Endothelial cell of umbilical vein (primary cell): ENCODE measurements at regions of chr4 and their contacts with region 1.

Region 1: GRCh38 chr4:83150653-83151330 is 36.3 kb upstream of the PLAC8 start:
- DNase-seq: peak; percentile 87
- H3K4me3 ChIP-seq: peak overlapping the region in 1 of 3 experiments; percentile 7
- H3K27ac ChIP-seq: peak overlapping the region; percentile 78
- H3K4me1 ChIP-seq: peaks cover 38% of the 10 kb centered on the region
- H3K27me3 ChIP-seq: no peaks in the 10 kb centered on the region
- CTCF ChIP-seq: no peak
- POLR2A ChIP-seq: peak; percentile 16

Region 2: DNA sequence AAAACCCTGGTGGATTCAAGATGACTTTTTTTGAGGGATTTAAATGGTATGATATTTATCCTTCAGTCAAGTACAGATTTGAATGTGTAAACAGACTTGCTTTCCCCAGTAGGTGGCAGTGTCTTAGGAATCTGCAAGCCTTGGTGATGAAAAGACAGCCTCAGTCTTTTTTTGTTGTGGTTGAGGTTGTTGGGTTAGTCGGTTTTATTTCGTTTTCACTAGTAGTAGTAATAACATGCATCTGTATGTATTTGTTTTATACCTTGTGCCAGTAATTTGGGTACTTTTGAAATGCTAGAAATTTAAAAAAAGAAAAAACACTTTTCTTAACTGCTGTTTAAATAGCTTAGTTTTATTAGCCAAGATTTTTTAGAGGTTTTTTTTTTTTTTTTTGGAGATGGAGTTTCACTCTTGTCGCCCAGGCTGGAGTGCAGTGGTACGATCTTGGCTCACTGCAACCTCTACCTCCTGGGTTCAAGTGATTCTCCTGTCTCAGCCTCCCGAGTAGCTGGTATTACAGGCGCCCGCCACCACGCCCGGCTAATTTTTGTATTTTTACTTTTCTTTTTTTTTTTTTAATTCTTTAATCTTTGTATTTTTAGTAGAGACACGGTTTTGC is 76.6 kb before region 1 on chr4:
- CTCF ChIA-PET with region 1: interaction called, 10 read pairs
- POLR2A ChIA-PET with region 1: no interaction called
- dilution Hi-C with region 1: no loop called
- intact Hi-C with region 1: no loop called
- DNase-seq: peak; percentile 72
- H3K4me3 ChIP-seq: no peak overlapping the region
- H3K27ac ChIP-seq: no peak overlapping the region
- H3K4me1 ChIP-seq: peaks cover 28% of the 10 kb centered on the region
- H3K27me3 ChIP-seq: no peaks in the 10 kb centered on the region
- CTCF ChIP-seq: peak; percentile 59 to 63
- POLR2A ChIP-seq: no peak

Region 3: DNA sequence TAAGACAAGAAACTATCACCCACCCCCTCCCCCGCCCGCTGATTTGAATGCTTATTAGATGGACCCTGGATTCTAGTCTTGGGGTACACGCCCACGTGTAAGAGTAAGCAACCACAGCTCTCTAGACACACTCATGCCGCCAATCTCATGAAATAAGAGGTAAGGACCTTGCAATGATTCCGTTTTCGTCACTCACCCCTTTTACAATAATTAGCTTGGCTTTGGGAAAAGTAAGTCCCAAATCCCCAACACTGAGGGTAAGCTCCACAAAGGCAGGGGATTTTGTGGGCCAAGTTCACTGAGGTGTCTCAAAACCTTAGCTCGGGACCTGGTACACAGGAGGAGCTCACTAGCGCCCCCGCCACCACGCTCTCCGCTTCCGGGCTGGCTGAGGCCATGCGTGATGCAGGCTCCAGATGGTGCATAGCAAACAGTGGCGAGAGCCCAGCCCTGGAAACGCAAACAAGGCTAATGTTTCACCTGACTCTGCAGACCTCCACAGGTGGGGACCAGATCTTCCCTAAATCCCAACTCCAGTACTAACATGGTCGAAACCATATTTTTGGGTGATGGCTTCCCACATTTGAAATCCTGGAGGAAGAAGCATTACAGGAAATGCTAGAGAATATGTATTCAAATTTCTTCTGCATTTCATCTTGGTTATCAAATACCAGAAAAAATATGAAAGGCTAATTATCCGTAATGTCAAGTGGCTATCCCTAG is 40.4 kb before region 1 on chr4:
- CTCF ChIA-PET with region 1: interaction called, 10 read pairs
- POLR2A ChIA-PET with region 1: no interaction called
- dilution Hi-C with region 1: no loop called
- intact Hi-C with region 1: loop called (anchors 1 kb)
- DNase-seq: peak; percentile 86
- H3K4me3 ChIP-seq: peak overlapping the region; percentile 48 to 78 (median 70)
- H3K27ac ChIP-seq: peak overlapping the region; percentile 71
- H3K4me1 ChIP-seq: peaks cover 13% of the 10 kb centered on the region
- H3K27me3 ChIP-seq: no peaks in the 10 kb centered on the region
- CTCF ChIP-seq: peak; percentile 72 to 87
- POLR2A ChIP-seq: peak; percentile 31

Region 4: DNA sequence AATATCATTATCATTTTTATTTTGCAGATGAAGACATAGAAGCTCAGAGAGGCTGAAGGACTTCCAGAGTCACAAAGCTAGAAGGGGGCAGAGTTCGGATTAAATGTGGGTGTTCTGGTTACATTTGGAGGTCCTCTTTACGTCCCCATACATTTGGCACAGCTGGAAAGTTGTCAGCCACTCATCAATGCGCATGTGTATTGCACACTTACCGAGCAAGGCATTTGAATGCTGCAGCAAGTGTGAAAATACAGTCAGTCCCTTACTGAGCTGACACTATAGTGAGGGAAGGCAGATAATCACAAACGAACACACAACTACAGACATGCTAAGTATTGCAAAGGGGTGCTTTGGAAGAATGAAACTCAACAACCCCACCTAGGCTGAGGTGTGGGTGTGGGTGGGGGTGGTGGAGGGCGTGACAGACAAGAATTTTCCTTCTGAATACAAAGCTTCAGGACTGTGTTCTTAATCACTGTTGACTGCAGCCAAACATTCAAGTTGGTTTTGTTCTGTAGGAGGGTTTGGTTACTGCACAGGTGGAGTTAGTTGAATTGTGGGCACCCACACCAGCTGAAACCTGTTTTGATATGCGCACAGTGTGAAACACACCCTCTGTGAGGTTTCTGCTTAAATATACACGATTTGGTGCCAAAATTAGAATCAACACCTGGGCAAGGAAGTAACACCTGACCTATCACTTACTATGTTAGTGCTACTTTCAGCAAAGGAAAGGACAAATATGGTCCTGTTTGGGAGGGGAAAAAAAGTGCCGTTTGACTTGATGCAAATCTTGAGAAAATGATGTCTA is 61.5 kb after region 1 on chr4:
- CTCF ChIA-PET with region 1: no interaction called
- POLR2A ChIA-PET with region 1: no interaction called
- dilution Hi-C with region 1: loop called (anchors 5 kb)
- intact Hi-C with region 1: no loop called
- DNase-seq: no peak
- H3K4me3 ChIP-seq: no peak overlapping the region
- H3K27ac ChIP-seq: no peak overlapping the region
- H3K4me1 ChIP-seq: no peaks in the 10 kb centered on the region
- H3K27me3 ChIP-seq: no peaks in the 10 kb centered on the region
- CTCF ChIP-seq: no peak
- POLR2A ChIP-seq: no peak